CD14-positive monocyte (primary cell): ENCODE measurements at regions of chr13 and their contacts with region 1.

Region 1: DNA sequence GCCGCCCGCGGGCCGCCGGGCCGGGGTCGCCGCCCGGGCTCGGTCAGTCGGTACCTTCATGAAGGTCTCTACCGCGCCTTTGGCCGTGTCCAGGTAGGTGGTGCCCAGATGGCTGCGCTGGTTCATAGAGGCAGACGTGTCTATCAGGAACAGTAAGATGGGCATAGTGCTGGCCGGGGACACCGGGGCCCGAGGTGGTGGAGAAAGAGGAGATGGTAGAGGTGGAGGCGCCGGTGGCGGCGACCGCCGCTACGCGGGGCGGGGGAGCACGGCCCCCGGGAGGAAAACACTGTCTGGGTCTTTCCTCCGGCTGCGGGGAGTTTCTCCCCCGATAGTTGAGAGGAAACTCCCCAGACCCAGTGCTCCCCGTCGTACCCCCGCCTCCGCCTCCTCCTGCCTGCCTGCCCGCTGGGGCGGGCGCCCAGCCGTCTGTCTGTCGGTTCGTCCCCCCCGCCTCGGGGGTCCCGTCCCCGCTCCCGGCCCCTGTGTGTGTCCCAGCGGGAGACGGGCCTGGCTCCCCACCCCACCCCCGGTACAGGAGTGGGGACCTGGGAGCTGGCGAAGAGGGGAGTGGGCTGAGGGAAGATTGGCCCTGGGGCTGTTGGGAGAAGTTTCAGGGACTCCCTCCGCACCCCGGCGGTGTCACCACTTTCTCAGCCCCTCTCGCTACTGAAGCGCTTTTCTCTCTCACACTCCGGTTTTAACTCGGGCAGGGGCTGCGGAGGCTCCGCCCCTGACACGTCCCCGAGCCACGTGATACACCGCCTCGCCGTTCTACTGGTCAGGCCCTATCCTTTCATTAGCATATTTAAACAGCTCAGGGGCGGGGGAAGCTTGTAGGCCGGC is at the start of gene INTS6:
- DNase-seq: peak; percentile 99 to 100 (median 99)
- H3K4me3 ChIP-seq: peak within 1 kb of the TSS; percentile 91 to 98 (median 96)
- H3K4me3 Mint-ChIP-seq: peak within 1 kb of the TSS; percentile 88 to 94
- H3K27ac ChIP-seq: peak within 1 kb of the TSS; percentile 91 to 95
- H3K27ac Mint-ChIP-seq: peak within 1 kb of the TSS; percentile 96 to 99 (median 98)
- H3K4me1 ChIP-seq: peaks cover 35 to 56% of the 10 kb centered on the region in 2 donors
- H3K4me1 Mint-ChIP-seq: peaks cover 44% of the 10 kb centered on the region
- H3K27me3 ChIP-seq: no peaks in the 10 kb centered on the region
- H3K27me3 Mint-ChIP-seq: no peaks in the 10 kb centered on the region
- CTCF ChIP-seq: no peak
- polyA plus RNA-seq, gene INTS6: 10.8 to 13.2 (median 11.6) TPM

Region 2: DNA sequence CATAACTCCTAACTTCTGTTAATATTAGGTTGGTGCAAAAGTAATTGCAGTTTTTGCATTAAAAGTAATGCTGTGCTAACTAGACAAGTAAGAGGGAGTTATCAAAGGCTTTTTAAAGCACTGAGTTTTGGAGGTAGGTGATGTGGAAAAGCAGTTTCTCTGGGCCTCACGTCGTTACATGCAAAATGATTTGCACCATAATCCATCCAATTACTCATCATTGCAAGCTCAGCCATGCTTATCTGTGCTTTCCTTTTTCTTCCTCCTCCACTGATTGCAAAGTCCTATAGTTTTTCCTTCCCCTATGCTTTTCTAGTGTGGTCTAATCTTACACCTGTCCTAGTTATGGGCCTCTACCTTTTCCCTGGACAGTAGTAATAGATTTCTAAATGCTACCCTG is 35.6 kb after region 1 on chr13:
- intact Hi-C with region 1: no loop called
- DNase-seq: no peak
- H3K4me3 ChIP-seq: no peak overlapping the region
- H3K4me3 Mint-ChIP-seq: no peak overlapping the region
- H3K27ac ChIP-seq: no peak overlapping the region
- H3K27ac Mint-ChIP-seq: no peak overlapping the region
- H3K4me1 ChIP-seq: no peaks in the 10 kb centered on the region
- H3K4me1 Mint-ChIP-seq: no peaks in the 10 kb centered on the region
- H3K27me3 ChIP-seq: no peaks in the 10 kb centered on the region
- H3K27me3 Mint-ChIP-seq: no peaks in the 10 kb centered on the region
- CTCF ChIP-seq: no peak

Region 3: DNA sequence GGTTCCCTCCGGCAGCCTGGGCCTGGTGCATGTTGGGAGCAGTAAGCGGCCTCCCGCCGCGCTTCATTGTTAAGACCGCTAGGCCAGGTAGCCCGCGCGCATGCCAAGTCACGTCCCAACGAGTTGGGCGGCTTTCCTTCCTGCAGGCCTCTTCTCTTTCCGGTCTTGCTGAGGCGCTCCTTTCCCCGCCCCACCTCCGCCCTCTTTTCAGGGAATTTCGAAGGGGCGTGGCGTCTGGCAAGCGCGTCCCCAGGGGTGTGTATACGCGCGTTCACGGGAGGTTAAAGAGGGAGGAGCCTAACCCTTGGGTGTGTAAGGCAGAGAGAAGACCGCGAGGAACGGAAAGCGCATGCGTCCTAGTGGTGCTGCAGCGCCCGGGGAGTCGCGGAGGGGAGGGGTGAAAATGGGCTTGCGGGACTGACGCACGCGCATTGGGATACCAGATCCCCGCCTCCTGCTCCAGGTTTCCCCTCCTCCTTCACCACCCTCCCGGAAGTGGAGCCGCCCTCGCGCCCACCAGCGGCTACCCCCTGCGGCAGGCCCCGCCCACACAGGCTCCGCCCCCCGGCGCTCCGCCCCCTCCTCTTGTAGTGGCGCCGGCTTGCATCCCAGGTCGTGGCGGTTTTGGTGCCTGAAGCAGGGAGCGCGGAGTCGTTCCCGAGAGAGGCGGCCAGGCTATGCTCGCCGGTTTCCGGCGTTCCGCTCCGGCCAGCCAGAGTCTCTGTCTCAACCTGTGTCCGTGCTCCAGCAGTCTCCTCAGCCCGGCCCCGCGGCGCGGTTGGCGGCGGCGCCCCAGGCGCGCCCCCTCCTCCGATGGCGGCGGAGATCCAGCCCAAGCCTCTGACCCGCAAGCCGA is 131.5 kb after region 1 on chr13 and contains the start of gene WDFY2:
- intact Hi-C with region 1: loop called (anchors 1 to 2 kb)
- DNase-seq: peak; percentile 99 to 100 (median 100)
- H3K4me3 ChIP-seq: peak within 1 kb of the TSS; percentile 85 to 96 (median 91)
- H3K4me3 Mint-ChIP-seq: peak within 1 kb of the TSS; percentile 96 to 98
- H3K27ac ChIP-seq: peak within 1 kb of the TSS; percentile 85 to 89
- H3K27ac Mint-ChIP-seq: peak within 1 kb of the TSS; percentile 94 to 99 (median 99)
- H3K4me1 ChIP-seq: peaks cover 32 to 57% of the 10 kb centered on the region in 2 donors
- H3K4me1 Mint-ChIP-seq: peaks cover 51% of the 10 kb centered on the region
- H3K27me3 ChIP-seq: no peaks in the 10 kb centered on the region
- H3K27me3 Mint-ChIP-seq: peaks cover 0 to 5% (median 0%) of the 10 kb centered on the region in 3 donors
- CTCF ChIP-seq: no peak
- polyA plus RNA-seq, gene WDFY2: 6.5 to 40.1 (median 9.1) TPM

Region 4: DNA sequence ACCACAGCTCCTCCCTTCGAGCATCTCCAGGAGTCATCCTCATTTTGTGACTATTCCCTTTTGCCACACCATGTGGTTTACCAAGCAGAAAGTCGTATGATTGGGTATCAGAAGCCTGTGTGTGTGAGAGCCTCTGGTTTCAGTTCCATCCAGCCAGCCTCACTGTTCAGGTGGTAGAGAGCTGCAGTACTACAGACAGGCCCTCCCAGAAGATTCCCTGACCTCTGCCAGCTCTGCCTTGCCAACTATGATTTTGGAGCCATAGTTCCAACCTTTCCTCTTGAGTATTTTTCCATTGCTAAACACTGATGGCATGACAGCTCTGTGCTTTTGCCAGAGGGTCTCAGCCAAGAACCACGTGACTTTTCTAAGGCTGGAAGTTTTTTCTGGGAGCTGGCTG is 268.9 kb after region 1 on chr13:
- intact Hi-C with region 1: loop called in 1 of 2 experiments (anchors 5 kb)
- DNase-seq: no peak
- H3K4me3 ChIP-seq: no peak overlapping the region
- H3K4me3 Mint-ChIP-seq: no peak overlapping the region
- H3K27ac ChIP-seq: peak overlapping the region in 1 of 2 donors; percentile 47
- H3K27ac Mint-ChIP-seq: peak overlapping the region in 4 of 7 donors; percentile 51 to 75 (median 58)
- H3K4me1 ChIP-seq: no peaks in the 10 kb centered on the region
- H3K4me1 Mint-ChIP-seq: no peaks in the 10 kb centered on the region
- H3K27me3 ChIP-seq: no peaks in the 10 kb centered on the region
- H3K27me3 Mint-ChIP-seq: no peaks in the 10 kb centered on the region
- CTCF ChIP-seq: no peak

Region 5: GRCh38 chr13:51803422-51804294 is 351.1 kb after region 1 on chr13 and contains the start of gene DHRS12:
- intact Hi-C with region 1: loop called (anchors 5 to 10 kb)
- DNase-seq: peak; percentile 87 to 91 (median 88)
- H3K4me3 ChIP-seq: peak within 1 kb of the TSS; percentile 73 to 81 (median 79)
- H3K4me3 Mint-ChIP-seq: peak within 1 kb of the TSS; percentile 84 to 88
- H3K27ac ChIP-seq: peak within 1 kb of the TSS; percentile 81 to 95
- H3K27ac Mint-ChIP-seq: peak within 1 kb of the TSS; percentile 96 to 98 (median 97)
- H3K4me1 ChIP-seq: peaks cover 32 to 38% of the 10 kb centered on the region in 2 donors
- H3K4me1 Mint-ChIP-seq: peaks cover 46% of the 10 kb centered on the region
- H3K27me3 ChIP-seq: no peaks in the 10 kb centered on the region
- H3K27me3 Mint-ChIP-seq: peaks cover 2 to 28% (median 10%) of the 10 kb centered on the region in 3 donors
- CTCF ChIP-seq: no peak
- polyA plus RNA-seq, gene DHRS12: 7.6 to 20.2 (median 20.0) TPM

Region 6: GRCh38 chr13:52011632-52012511 is 559.3 kb after region 1 on chr13 and contains the start of gene ALG11:
- intact Hi-C with region 1: loop called in 1 of 2 experiments (anchors 5 kb)
- DNase-seq: peak; percentile 95 to 99 (median 97)
- H3K4me3 ChIP-seq: peak within 1 kb of the TSS; percentile 74 to 97 (median 87)
- H3K4me3 Mint-ChIP-seq: peak within 1 kb of the TSS; percentile 95 to 99
- H3K27ac ChIP-seq: peak within 1 kb of the TSS; percentile 24 to 86
- H3K27ac Mint-ChIP-seq: peak within 1 kb of the TSS; percentile 90 to 98 (median 95)
- H3K4me1 ChIP-seq: peaks cover 16 to 24% of the 10 kb centered on the region in 2 donors
- H3K4me1 Mint-ChIP-seq: peaks cover 24% of the 10 kb centered on the region
- H3K27me3 ChIP-seq: peaks cover 22 to 33% of the 10 kb centered on the region in 2 donors
- H3K27me3 Mint-ChIP-seq: peaks cover 26 to 37% (median 30%) of the 10 kb centered on the region in 3 donors
- CTCF ChIP-seq: no peak
- polyA plus RNA-seq, gene ALG11: 3.7 to 16.9 (median 14.2) TPM